ENCODE measurements at regions of chr2 and their contacts with region 1.

Region 1: GRCh38 chr2:15177103-15177502 is 384.0 kb downstream of the NBAS start:
- DNase-seq: peak; percentile 68
- H3K4me3 Mint-ChIP-seq: peak overlapping the region; percentile 13
- H3K27ac Mint-ChIP-seq: peak overlapping the region; percentile 13
- H3K4me1 Mint-ChIP-seq: peaks cover 50% of the 10 kb centered on the region
- H3K27me3 Mint-ChIP-seq: peaks cover 5% of the 10 kb centered on the region

Region 2: GRCh38 chr2:15038366-15039364 is 138.4 kb before region 1 on chr2:
- intact Hi-C with region 1: loop called (anchors 1 kb)
- DNase-seq: no peak
- H3K4me3 Mint-ChIP-seq: no peak overlapping the region
- H3K27ac Mint-ChIP-seq: peak overlapping the region; percentile 3
- H3K4me1 Mint-ChIP-seq: peaks cover 11% of the 10 kb centered on the region
- H3K27me3 Mint-ChIP-seq: no peaks in the 10 kb centered on the region

Region 3: GRCh38 chr2:15205562-15205961 is 28.5 kb after region 1 on chr2:
- intact Hi-C with region 1: loop called (anchors 1 kb)
- DNase-seq: no peak
- H3K4me3 Mint-ChIP-seq: no peak overlapping the region
- H3K27ac Mint-ChIP-seq: no peak overlapping the region
- H3K4me1 Mint-ChIP-seq: peaks cover 24% of the 10 kb centered on the region
- H3K27me3 Mint-ChIP-seq: no peaks in the 10 kb centered on the region

Region 4: GRCh38 chr2:15313657-15314056 is 136.6 kb after region 1 on chr2:
- intact Hi-C with region 1: loop called (anchors 1 kb)
- DNase-seq: no peak
- H3K4me3 Mint-ChIP-seq: no peak overlapping the region
- H3K27ac Mint-ChIP-seq: no peak overlapping the region
- H3K4me1 Mint-ChIP-seq: peaks cover 82% of the 10 kb centered on the region
- H3K27me3 Mint-ChIP-seq: peaks cover 3% of the 10 kb centered on the region

Region 5: DNA sequence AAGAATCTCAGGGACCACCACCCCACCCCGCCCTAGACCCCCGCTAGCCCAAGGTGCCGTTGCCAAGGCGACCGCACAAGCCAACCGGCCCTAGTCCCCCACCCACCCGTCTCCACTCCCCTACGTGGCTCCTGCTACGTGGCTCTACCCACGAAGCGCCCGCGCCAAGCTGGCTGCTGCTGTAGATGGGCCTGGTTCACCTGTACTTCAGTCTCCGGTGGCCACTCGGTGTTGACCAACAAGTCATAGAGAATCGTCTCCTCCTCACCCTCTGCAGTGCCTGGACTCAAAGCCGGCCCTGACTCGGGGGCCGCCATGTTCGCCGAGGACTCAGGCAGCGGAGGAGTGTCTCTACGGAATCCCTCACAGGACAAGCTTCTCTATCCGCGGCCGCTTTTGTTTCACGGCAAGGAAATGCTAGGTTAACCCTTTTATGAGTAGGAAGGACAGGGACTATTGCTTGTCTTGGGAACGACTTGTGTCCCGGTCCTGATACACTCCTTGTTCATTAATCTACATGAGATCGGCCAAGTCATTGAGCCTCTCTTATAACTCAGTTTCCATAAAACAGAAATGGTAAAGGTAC is 384.0 kb after region 1 on chr2 and contains the start of gene NBAS:
- intact Hi-C with region 1: loop called (anchors 1 kb)
- DNase-seq: peak; percentile 68
- H3K4me3 Mint-ChIP-seq: peak within 1 kb of the TSS; percentile 97
- H3K27ac Mint-ChIP-seq: peak within 1 kb of the TSS; percentile 86
- H3K4me1 Mint-ChIP-seq: peaks cover 41% of the 10 kb centered on the region
- H3K27me3 Mint-ChIP-seq: peaks cover 3% of the 10 kb centered on the region
- total RNA-seq, gene NBAS: 33.3 and 33.6 TPM in 2 replicates

Region 6: GRCh38 chr2:15591692-15592463 is 414.8 kb after region 1 on chr2 and contains the start of gene DDX1:
- intact Hi-C with region 1: loop called (anchors 1 kb)
- DNase-seq: peak; percentile 81
- H3K4me3 Mint-ChIP-seq: peak within 1 kb of the TSS; percentile 91
- H3K27ac Mint-ChIP-seq: peak within 1 kb of the TSS; percentile 91
- H3K4me1 Mint-ChIP-seq: peaks cover 30% of the 10 kb centered on the region
- H3K27me3 Mint-ChIP-seq: no peaks in the 10 kb centered on the region
- total RNA-seq, gene DDX1: 104 and 111 TPM in 2 replicates

Measured in activated T-helper 1 cell treated with anti-CD3 and anti-CD28 coated beads, Interleukin-12 subunit alpha, Interleukin-12 subunit beta, Interleukin-2, Interleukin-4 antibody, amounts not matched to agents 30 ng/mL and 10 ng/mL and 1 ng/mL, durations not matched to agents 14 hours and 24 hours and 36 hours (primary cell).